B cell (primary cell): ENCODE measurements at regions of chr1 and their contacts with region 1.

Region 1: GRCh38 chr1:8560611-8561544 is 243.0 kb downstream of the SLC45A1 start:
- DNase-seq: peak; percentile 73
- ATAC-seq: peak; percentile 88
- H3K4me3 ChIP-seq: no peak overlapping the region
- H3K4me3 Mint-ChIP-seq: no peak overlapping the region
- H3K27ac ChIP-seq: peak overlapping the region in 1 of 2 donors; percentile 52
- H3K27ac Mint-ChIP-seq: peak overlapping the region; percentile 53
- H3K4me1 ChIP-seq: peaks cover 25 to 37% of the 10 kb centered on the region in 2 donors
- H3K4me1 Mint-ChIP-seq: peaks cover 44% of the 10 kb centered on the region
- H3K27me3 ChIP-seq: no peaks in the 10 kb centered on the region
- H3K27me3 Mint-ChIP-seq: no peaks in the 10 kb centered on the region
- CTCF ChIP-seq: peak; percentile 98

Region 2: DNA sequence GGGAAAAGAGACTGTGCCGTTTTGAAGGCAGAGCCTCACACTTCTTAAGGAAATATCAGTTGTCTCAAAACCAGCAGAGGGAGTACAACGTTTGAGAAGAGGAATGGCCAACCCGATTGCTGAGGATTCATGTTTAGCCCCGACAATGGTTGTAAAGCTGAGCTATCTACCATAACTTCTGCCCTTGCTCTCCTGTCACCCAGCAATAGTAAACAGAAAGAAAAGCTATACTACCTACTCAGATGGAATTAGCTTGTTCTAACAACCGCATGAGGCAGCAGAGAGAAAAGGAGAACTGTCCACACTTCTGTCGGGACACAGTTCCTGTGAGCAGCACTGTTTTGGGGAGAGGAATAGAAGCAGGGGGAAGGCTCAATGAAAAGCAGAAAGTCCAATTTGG is 151.8 kb before region 1 on chr1:
- CTCF ChIA-PET with region 1: interaction called, 18 read pairs
- POLR2A ChIA-PET with region 1: no interaction called
- intact Hi-C with region 1: no loop called
- DNase-seq: peak; percentile 63
- ATAC-seq: peak; percentile 87
- H3K4me3 ChIP-seq: no peak overlapping the region
- H3K4me3 Mint-ChIP-seq: peak overlapping the region; percentile 11
- H3K27ac ChIP-seq: peak overlapping the region; percentile 6 to 51
- H3K27ac Mint-ChIP-seq: peak overlapping the region; percentile 27
- H3K4me1 ChIP-seq: peaks cover 11 to 21% of the 10 kb centered on the region in 2 donors
- H3K4me1 Mint-ChIP-seq: peaks cover 38% of the 10 kb centered on the region
- H3K27me3 ChIP-seq: no peaks in the 10 kb centered on the region
- H3K27me3 Mint-ChIP-seq: no peaks in the 10 kb centered on the region
- CTCF ChIP-seq: peak; percentile 71

Region 3: DNA sequence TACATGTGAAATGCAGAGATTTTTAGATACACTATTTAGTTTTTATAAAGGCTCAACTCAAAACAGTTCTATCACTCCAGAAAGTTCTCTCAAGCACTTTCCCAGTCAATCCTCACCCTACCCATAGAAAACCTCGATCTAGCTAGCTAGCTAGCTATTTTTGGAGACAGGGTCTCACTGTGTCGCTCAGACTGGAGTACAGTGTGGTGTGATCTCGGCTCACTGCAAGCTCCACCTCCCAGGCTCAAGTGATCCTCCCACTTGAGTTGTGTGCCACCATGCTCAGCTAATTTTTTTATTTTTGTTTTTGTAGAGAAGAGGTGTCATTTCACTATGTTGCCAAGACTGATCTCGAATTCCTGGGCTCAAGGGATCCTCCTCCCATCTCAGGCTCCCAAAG is 19.7 kb after region 1 on chr1:
- CTCF ChIA-PET with region 1: interaction called, 12 read pairs
- POLR2A ChIA-PET with region 1: no interaction called
- intact Hi-C with region 1: no loop called
- DNase-seq: no peak
- ATAC-seq: no peak
- H3K4me3 ChIP-seq: no peak overlapping the region
- H3K4me3 Mint-ChIP-seq: no peak overlapping the region
- H3K27ac ChIP-seq: no peak overlapping the region
- H3K27ac Mint-ChIP-seq: peak overlapping the region; percentile 37
- H3K4me1 ChIP-seq: no peaks in the 10 kb centered on the region
- H3K4me1 Mint-ChIP-seq: peaks cover 4% of the 10 kb centered on the region
- H3K27me3 ChIP-seq: no peaks in the 10 kb centered on the region
- H3K27me3 Mint-ChIP-seq: no peaks in the 10 kb centered on the region
- CTCF ChIP-seq: no peak

Region 4: GRCh38 chr1:8671306-8671917 is 110.5 kb after region 1 on chr1:
- CTCF ChIA-PET with region 1: interaction called, 205 read pairs
- POLR2A ChIA-PET with region 1: no interaction called
- intact Hi-C with region 1: loop called (anchors 1 kb)
- DNase-seq: peak; percentile 73
- ATAC-seq: no peak
- H3K4me3 ChIP-seq: no peak overlapping the region
- H3K4me3 Mint-ChIP-seq: no peak overlapping the region
- H3K27ac ChIP-seq: no peak overlapping the region
- H3K27ac Mint-ChIP-seq: no peak overlapping the region
- H3K4me1 ChIP-seq: peaks cover 48 to 59% of the 10 kb centered on the region in 2 donors
- H3K4me1 Mint-ChIP-seq: peaks cover 66% of the 10 kb centered on the region
- H3K27me3 ChIP-seq: no peaks in the 10 kb centered on the region
- H3K27me3 Mint-ChIP-seq: no peaks in the 10 kb centered on the region
- CTCF ChIP-seq: peak; percentile 92

Region 5: DNA sequence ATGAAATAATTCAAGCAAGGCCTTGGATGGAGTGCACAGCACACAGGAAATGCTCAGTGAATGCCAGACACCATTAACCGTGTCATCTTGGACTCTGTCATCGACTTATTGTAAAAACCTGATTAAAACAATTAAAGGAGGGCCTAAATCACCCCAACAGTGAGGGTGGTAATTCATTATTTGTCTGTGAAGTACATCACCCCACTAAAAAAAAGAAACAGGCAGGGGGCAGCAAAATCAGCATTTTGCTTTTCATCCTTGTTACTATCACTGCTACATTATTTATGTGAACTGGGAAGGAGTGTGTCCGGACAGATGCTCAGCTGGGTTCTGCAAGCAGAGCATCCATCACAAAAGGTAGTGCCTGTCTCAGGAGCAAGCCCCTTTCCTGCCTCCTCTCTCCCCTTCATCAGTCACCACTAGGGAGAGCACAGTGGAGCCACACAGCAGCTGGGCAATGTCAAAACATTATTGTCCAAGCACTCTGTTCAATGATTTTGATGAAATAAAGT is 158.0 kb after region 1 on chr1:
- CTCF ChIA-PET with region 1: interaction called, 328 read pairs
- POLR2A ChIA-PET with region 1: no interaction called
- intact Hi-C with region 1: no loop called
- DNase-seq: no peak
- ATAC-seq: no peak
- H3K4me3 ChIP-seq: no peak overlapping the region
- H3K4me3 Mint-ChIP-seq: no peak overlapping the region
- H3K27ac ChIP-seq: no peak overlapping the region
- H3K27ac Mint-ChIP-seq: peak overlapping the region; percentile 17
- H3K4me1 ChIP-seq: peaks cover 26 to 40% of the 10 kb centered on the region in 2 donors
- H3K4me1 Mint-ChIP-seq: peaks cover 59% of the 10 kb centered on the region
- H3K27me3 ChIP-seq: no peaks in the 10 kb centered on the region
- H3K27me3 Mint-ChIP-seq: no peaks in the 10 kb centered on the region
- CTCF ChIP-seq: no peak

Region 6: GRCh38 chr1:9004700-9005394 is 444.0 kb after region 1 on chr1:
- CTCF ChIA-PET with region 1: no interaction called
- POLR2A ChIA-PET with region 1: no interaction called
- intact Hi-C with region 1: no loop called
- DNase-seq: peak; percentile 83
- ATAC-seq: peak; percentile 79
- H3K4me3 ChIP-seq: no peak overlapping the region
- H3K4me3 Mint-ChIP-seq: no peak overlapping the region
- H3K27ac ChIP-seq: no peak overlapping the region
- H3K27ac Mint-ChIP-seq: peak overlapping the region; percentile 3
- H3K4me1 ChIP-seq: peaks cover 11 to 26% of the 10 kb centered on the region in 2 donors
- H3K4me1 Mint-ChIP-seq: peaks cover 33% of the 10 kb centered on the region
- H3K27me3 ChIP-seq: peaks cover 0 to 11% (median 2%) of the 10 kb centered on the region in 4 experiments
- H3K27me3 Mint-ChIP-seq: peaks cover 16% of the 10 kb centered on the region
- CTCF ChIP-seq: peak; percentile 91

Region 7: GRCh38 chr1:9018333-9018732 is 457.5 kb after region 1 on chr1:
- CTCF ChIA-PET with region 1: no interaction called
- POLR2A ChIA-PET with region 1: no interaction called
- intact Hi-C with region 1: no loop called
- DNase-seq: no peak
- ATAC-seq: no peak
- H3K4me3 ChIP-seq: no peak overlapping the region
- H3K4me3 Mint-ChIP-seq: no peak overlapping the region
- H3K27ac ChIP-seq: no peak overlapping the region
- H3K27ac Mint-ChIP-seq: no peak overlapping the region
- H3K4me1 ChIP-seq: peaks cover 14% of the 10 kb centered on the region in 2 donors
- H3K4me1 Mint-ChIP-seq: peaks cover 26% of the 10 kb centered on the region
- H3K27me3 ChIP-seq: peaks cover 0 to 5% (median 0%) of the 10 kb centered on the region in 4 experiments
- H3K27me3 Mint-ChIP-seq: peaks cover 8% of the 10 kb centered on the region
- CTCF ChIP-seq: no peak